AG04450 (cell line): ENCODE measurements at regions of chr10 and their contacts with region 1.

Region 1: GRCh38 chr10:77641788-77642397 is 4.3 kb upstream of the KCNMA1 start:
- DNase-seq: peak; percentile 53
- H3K4me3 ChIP-seq: no peak overlapping the region
- H3K27ac ChIP-seq: no peak overlapping the region
- H3K27me3 ChIP-seq: peaks cover 4% of the 10 kb centered on the region
- CTCF ChIP-seq: peak; percentile 77

Region 2: DNA sequence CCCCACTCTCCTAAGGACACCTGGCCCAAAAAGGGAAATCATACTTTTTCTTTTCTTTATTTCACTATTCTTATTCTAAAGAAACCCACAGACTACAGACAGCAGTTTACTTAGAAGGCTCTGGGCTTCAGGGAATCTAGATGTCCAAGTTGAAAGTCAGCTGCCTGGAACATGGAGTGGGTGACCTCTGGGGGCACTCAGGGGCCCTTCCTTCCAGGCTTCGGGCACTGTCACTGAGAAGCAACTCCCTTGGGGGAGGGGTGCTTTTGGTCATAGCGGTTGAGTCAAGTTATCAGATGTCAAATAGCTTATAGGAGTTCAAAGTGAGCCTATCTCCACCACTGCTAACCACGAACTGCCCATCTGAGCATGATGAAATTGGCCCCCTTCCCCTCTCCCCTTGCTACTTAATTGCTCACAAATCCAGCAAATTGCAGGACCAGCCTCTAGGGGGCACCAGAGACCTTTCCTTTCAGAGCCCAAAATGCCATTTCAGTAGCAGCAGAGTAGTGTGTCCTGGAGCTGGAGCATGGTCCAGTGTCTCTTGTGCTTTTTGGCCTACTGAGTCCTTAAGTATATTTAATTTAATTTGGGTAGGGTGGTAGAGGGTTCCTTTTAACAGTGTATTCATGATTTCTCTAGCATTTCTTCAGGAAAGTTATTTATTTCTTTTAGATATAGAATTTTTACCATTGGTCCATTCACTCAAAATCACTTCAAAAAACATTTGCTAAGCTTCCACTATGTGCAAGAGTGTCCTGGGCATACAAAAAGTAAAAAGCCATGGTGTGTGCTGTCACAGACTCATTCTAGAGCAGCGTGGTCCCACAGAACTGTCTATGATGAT is 468.1 kb before region 1 on chr10:
- CTCF ChIA-PET with region 1: interaction called, 199 read pairs
- POLR2A ChIA-PET with region 1: no interaction called
- DNase-seq: peak; percentile 66
- H3K4me3 ChIP-seq: no peak overlapping the region
- H3K27ac ChIP-seq: no peak overlapping the region
- H3K27me3 ChIP-seq: no peaks in the 10 kb centered on the region
- CTCF ChIP-seq: peak; percentile 93

Region 3: GRCh38 chr10:77251297-77252013 is 390.4 kb before region 1 on chr10:
- CTCF ChIA-PET with region 1: interaction called, 55 read pairs
- POLR2A ChIA-PET with region 1: no interaction called
- DNase-seq: no peak
- H3K4me3 ChIP-seq: no peak overlapping the region
- H3K27ac ChIP-seq: no peak overlapping the region
- H3K27me3 ChIP-seq: no peaks in the 10 kb centered on the region
- CTCF ChIP-seq: peak; percentile 77

Region 4: DNA sequence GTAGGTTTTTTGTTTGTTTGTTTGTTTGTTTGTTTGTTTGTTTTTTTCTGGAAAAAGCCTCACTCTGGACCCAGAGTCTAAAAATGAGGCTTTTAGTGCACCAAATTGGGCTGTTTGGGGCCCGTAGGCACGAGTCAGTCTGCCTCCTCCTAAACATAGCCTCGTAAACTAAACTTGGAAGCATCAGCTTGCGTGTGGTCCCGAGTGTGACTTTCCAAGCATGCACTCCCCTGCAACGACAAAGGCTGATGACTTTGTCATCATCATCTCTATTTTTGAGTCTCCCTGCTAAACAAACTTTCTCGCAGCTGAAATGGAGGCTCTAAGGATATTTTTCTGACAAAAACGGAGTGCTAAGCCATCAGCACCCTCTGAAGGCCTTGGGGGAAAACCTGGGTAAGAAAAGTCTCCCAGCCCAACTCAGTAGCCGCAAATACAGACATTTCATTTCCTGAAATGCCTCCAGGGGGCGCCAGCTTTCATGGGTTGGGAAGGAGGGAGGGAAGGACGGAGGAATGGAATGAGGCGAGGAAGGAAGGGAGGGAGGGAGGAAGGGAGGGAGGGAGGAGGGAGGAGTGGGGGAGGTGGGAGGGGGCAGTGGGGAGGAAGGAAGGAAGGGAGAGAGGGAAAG is 250.2 kb before region 1 on chr10:
- CTCF ChIA-PET with region 1: interaction called, 54 read pairs
- POLR2A ChIA-PET with region 1: no interaction called
- DNase-seq: peak; percentile 73
- H3K4me3 ChIP-seq: no peak overlapping the region
- H3K27ac ChIP-seq: peak overlapping the region; percentile 78
- H3K27me3 ChIP-seq: no peaks in the 10 kb centered on the region
- CTCF ChIP-seq: peak; percentile 79

Region 5: DNA sequence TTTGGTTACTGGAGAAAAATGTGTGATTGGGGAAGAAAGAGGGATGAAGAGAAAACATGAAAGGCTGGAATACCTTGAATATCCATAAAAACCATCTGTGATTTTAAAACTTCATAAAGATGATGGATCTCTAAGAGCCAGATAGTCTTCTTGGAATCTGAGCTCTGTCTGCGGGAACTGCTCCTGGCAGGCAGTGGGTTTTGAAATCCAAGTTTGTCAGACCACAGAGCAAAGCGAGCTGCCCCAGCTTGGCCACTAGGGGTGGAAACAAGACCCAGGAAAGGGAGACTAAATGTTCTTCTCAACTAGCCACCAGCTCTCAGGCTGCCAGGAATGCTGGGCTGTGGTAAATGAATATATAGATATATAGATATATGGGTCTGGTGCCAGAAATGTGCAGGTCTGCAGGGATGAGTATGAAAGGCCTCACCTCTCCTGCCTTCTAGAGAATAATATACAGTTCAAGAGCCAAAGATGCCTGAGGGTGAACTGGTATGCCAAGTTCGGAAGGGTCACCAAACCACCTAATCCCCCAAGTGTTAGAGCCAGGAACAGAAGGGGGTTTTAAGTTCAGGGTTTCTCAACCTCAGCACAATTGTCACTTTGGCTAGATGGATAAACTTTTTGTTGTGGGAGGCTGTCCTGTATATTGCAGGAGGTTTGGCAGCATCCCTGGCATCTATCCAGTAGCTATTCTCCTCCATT is 213.1 kb before region 1 on chr10:
- CTCF ChIA-PET with region 1: interaction called, 33 read pairs
- POLR2A ChIA-PET with region 1: no interaction called
- DNase-seq: peak; percentile 60
- H3K4me3 ChIP-seq: no peak overlapping the region
- H3K27ac ChIP-seq: no peak overlapping the region
- H3K27me3 ChIP-seq: no peaks in the 10 kb centered on the region
- CTCF ChIP-seq: peak; percentile 92

Region 6: DNA sequence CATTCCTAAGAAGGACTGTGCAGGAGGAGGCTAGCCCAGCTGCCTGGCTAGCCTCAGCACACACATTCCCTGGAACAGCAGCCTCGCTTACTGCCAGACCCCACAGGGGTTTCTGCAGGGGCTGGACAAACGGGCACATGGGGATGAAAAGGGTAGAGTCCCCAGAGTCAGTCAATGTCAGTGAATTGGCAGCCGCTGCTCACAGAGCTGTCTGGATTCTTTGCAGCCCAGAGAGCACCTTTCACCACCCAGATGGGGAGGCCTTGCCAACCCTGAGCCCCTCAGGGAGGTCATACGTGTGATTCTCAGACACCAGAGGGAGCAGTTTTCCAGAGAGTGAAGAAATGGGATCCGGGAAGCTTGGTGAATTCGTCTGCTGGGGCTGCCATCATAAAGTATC is 147.6 kb before region 1 on chr10:
- CTCF ChIA-PET with region 1: interaction called, 15 read pairs
- POLR2A ChIA-PET with region 1: no interaction called
- DNase-seq: no peak
- H3K4me3 ChIP-seq: no peak overlapping the region
- H3K27ac ChIP-seq: no peak overlapping the region
- H3K27me3 ChIP-seq: no peaks in the 10 kb centered on the region
- CTCF ChIP-seq: peak; percentile 55

Region 7: GRCh38 chr10:77603534-77603927 is 38.4 kb before region 1 on chr10:
- CTCF ChIA-PET with region 1: no interaction called
- POLR2A ChIA-PET with region 1: no interaction called
- DNase-seq: no peak
- H3K4me3 ChIP-seq: no peak overlapping the region
- H3K27ac ChIP-seq: no peak overlapping the region
- H3K27me3 ChIP-seq: no peaks in the 10 kb centered on the region
- CTCF ChIP-seq: no peak

Region 8: DNA sequence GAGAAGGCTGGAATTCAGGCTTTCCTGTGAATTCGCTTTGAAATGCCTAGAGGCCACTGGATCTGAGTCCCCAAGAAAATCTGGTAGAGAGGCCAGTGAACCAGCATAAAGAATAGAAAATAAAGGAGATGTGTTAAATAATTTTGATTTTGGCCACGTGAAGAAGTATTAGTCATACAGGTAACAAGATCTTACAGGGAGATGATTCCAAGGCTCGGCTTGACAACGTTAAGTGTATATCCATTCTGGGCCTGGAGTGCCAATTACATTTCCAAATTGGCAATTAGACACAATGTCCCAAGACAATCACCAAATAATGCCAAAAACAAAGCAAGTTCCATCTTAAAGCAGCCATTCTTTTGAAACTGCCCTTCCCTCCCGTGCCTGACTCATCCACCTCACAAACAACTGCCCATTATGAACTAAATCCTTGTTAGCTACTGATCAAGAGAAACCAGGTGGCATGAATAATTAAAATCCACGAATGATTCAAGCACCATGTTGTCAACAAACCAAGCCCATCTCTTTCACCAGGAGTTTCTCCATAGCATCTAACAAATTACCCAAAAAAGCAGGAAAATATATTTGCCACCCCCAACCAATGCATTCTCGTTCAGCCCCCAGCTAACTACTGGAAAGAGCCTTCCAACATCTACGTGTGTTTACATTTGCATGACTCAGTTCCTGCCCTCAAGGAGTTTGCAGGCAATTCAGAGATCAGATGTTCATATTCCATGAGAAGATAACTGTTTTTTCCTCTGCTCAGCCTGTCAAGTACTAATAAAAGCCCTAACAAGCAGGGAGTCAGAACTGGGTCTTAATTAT is 12.8 kb before region 1 on chr10:
- CTCF ChIA-PET with region 1: interaction called, 15 read pairs
- POLR2A ChIA-PET with region 1: no interaction called
- DNase-seq: no peak
- H3K4me3 ChIP-seq: no peak overlapping the region
- H3K27ac ChIP-seq: no peak overlapping the region
- H3K27me3 ChIP-seq: no peaks in the 10 kb centered on the region
- CTCF ChIP-seq: no peak